ENCODE measurements at regions of chr1 and their contacts with region 1.

Region 1: DNA sequence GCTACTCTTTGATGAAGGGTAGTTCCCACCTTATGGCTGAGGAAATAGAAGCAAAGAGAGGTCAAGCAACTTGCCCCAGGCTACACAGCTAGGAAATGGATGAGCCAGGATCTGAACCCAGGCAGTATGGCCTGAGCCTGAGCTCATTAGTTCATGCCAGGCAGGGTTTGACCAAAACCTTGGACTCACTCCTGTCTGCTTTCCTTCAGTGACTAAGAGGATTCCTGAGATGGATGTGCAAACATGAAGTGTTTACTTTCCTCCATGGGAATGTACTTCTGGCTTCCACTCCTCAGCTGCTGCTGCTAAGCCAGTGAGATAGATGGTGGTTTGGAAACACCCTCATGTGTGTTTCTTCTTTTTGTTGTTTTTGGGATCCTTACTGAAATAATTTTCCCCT is 35.1 kb upstream of the ERRFI1 start:
- DNase-seq: peak; percentile 95
- ATAC-seq: peak; percentile 92
- H3K4me3 ChIP-seq: peak overlapping the region; percentile 57
- H3K27ac ChIP-seq: peak overlapping the region; percentile 99
- H3K4me1 ChIP-seq: peaks cover 41% of the 10 kb centered on the region
- H3K27me3 ChIP-seq: no peaks in the 10 kb centered on the region
- CTCF ChIP-seq: no peak

Region 2: GRCh38 chr1:8040586-8040985 is 20.6 kb before region 1 on chr1:
- CTCF ChIA-PET with region 1: no interaction called
- POLR2A ChIA-PET with region 1: interaction called, 13 read pairs
- intact Hi-C with region 1: no loop called
- DNase-seq: peak; percentile 99
- ATAC-seq: peak; percentile 97
- H3K4me3 ChIP-seq: no peak overlapping the region
- H3K27ac ChIP-seq: peak overlapping the region; percentile 85
- H3K4me1 ChIP-seq: peaks cover 30% of the 10 kb centered on the region
- H3K27me3 ChIP-seq: no peaks in the 10 kb centered on the region
- CTCF ChIP-seq: no peak

Region 3: GRCh38 chr1:8047681-8048445 is 13.3 kb before region 1 on chr1:
- CTCF ChIA-PET with region 1: interaction called, 4 read pairs
- POLR2A ChIA-PET with region 1: interaction called, 12 read pairs
- intact Hi-C with region 1: loop called (anchors 2 kb)
- DNase-seq: peak; percentile 94
- ATAC-seq: peak; percentile 74
- H3K4me3 ChIP-seq: peak overlapping the region; percentile 12; the same call in 1 of the 2 replicates
- H3K27ac ChIP-seq: peak overlapping the region; percentile 96
- H3K4me1 ChIP-seq: peaks cover 42% of the 10 kb centered on the region
- H3K27me3 ChIP-seq: no peaks in the 10 kb centered on the region
- CTCF ChIP-seq: no peak

Region 4: GRCh38 chr1:8090241-8090702 is 29.1 kb after region 1 on chr1:
- CTCF ChIA-PET with region 1: no interaction called
- POLR2A ChIA-PET with region 1: no interaction called
- intact Hi-C with region 1: loop called (anchors 1 kb)
- DNase-seq: peak; percentile 91
- ATAC-seq: peak; percentile 90
- H3K4me3 ChIP-seq: no peak overlapping the region
- H3K27ac ChIP-seq: peak overlapping the region; percentile 98
- H3K4me1 ChIP-seq: peaks cover 53% of the 10 kb centered on the region
- H3K27me3 ChIP-seq: no peaks in the 10 kb centered on the region
- CTCF ChIP-seq: no peak

Measured in PC-3 (cell line).